ENCODE measurements at regions of chr11 and their contacts with region 1.

Region 1: DNA sequence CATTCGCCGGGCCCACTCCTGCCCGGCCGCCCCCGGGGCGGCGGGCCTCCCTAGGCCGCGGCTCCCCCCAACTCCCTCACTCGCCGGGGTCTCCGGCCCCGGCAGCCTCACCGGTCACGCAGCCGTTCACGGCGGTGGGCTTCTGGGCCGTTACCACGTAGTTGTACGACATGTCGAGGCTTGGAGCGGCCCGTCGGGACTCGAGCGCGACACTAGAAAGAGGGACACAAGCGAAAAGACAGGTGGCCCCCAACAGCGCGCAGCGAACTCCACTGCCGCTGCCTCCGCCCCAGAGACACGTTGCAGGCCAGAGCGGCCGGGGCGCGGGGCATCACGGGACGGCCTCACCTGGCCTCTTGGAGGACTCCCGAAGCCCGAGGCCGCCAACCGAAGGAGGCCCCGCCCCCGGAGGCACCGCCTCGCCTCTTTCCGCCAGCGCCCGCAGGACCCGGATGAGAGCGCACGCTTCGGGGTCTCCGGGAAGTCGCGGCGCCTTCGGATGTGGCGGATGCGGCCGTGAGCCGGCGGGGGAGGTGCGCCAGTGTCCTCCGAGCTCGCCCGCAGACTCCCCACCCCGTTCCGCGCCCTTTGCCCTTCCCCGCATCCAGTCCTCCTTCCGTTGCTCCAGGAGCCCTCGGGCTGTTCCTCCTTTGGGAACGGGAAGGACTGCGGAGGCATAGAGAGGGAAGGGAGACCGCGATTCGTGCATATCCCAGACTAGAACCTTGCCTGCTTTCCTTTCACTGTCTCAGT is at the starts of genes DDB1 and TKFC:
- DNase-seq: peak; percentile 95 to 97
- ATAC-seq: peak; percentile 95 to 98 (median 97)
- H3K4me3 ChIP-seq: peak within 1 kb of the TSS; percentile 79 to 99 (median 95)
- H3K27ac ChIP-seq: peak within 1 kb of the TSS; percentile 81 to 96 (median 92)
- H3K4me1 ChIP-seq: peaks cover 11 to 61% (median 44%) of the 10 kb centered on the region in 9 donors
- H3K27me3 ChIP-seq: no peaks in the 10 kb centered on the region
- CTCF ChIP-seq: peak in 2 of 9 donors; percentile 4 to 7
- total RNA-seq, gene DDB1: 101 to 147 (median 129) TPM
- total RNA-seq, gene TKFC: 13.9 to 26.1 (median 20.9) TPM

Region 2: DNA sequence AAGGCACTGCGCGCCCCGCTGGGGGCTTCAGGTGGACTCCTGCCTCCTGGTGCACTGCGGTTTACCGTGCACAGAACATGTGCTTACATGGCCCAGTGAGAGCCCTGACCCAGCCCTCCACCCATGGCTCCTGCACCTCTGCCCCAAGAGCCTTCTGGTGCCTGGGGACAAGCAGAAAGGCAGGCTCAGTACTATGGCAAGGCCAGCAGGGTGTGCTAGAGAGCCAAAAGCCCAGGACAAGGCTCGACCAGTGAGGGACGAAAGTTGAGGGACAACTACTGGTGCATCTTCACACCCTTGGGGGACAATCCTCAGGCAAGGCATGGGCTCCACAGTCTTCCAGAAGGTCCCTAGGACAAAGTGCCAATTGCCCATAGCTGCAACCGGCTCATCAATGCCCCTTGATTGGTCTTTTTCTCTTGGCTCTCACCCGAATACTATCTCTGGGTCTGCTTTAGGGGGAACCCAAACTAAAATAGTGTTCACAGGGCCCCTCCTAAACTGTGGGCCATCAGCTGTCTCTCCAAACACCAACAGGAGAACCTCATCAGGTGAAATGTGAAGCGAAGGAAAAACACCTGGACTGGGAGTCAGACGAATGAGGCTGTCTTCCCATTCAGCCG is 78.5 kb before region 1 on chr11:
- intact Hi-C with region 1: loop called in 1 of 10 experiments (anchors 10 kb)
- DNase-seq: peak; percentile 44 to 57
- ATAC-seq: peak in 7 of 8 donors; percentile 30 to 73 (median 57)
- H3K4me3 ChIP-seq: no peak overlapping the region
- H3K27ac ChIP-seq: no peak overlapping the region
- H3K4me1 ChIP-seq: peaks cover 0 to 14% (median 0%) of the 10 kb centered on the region in 9 donors
- H3K27me3 ChIP-seq: no peaks in the 10 kb centered on the region
- CTCF ChIP-seq: peak; percentile 63 to 91 (median 81)

Region 3: GRCh38 chr11:61361686-61362541 is 28.9 kb after region 1 on chr11 and contains the starts of genes CYB561A3 and TMEM138:
- intact Hi-C with region 1: loop called in 4 of 10 experiments (anchors 1 to 5 kb)
- DNase-seq: peak; percentile 90
- ATAC-seq: peak; percentile 96 to 98 (median 98)
- H3K4me3 ChIP-seq: peak within 1 kb of the TSS; percentile 43 to 89 (median 76)
- H3K27ac ChIP-seq: peak within 1 kb of the TSS; percentile 93 to 100 (median 99)
- H3K4me1 ChIP-seq: peaks cover 3 to 48% (median 30%) of the 10 kb centered on the region in 9 donors
- H3K27me3 ChIP-seq: no peaks in the 10 kb centered on the region
- CTCF ChIP-seq: no peak
- total RNA-seq, gene CYB561A3: 6.0 to 18.6 (median 9.7) TPM
- total RNA-seq, gene TMEM138: 14.4 to 25.9 (median 17.6) TPM

Region 4: DNA sequence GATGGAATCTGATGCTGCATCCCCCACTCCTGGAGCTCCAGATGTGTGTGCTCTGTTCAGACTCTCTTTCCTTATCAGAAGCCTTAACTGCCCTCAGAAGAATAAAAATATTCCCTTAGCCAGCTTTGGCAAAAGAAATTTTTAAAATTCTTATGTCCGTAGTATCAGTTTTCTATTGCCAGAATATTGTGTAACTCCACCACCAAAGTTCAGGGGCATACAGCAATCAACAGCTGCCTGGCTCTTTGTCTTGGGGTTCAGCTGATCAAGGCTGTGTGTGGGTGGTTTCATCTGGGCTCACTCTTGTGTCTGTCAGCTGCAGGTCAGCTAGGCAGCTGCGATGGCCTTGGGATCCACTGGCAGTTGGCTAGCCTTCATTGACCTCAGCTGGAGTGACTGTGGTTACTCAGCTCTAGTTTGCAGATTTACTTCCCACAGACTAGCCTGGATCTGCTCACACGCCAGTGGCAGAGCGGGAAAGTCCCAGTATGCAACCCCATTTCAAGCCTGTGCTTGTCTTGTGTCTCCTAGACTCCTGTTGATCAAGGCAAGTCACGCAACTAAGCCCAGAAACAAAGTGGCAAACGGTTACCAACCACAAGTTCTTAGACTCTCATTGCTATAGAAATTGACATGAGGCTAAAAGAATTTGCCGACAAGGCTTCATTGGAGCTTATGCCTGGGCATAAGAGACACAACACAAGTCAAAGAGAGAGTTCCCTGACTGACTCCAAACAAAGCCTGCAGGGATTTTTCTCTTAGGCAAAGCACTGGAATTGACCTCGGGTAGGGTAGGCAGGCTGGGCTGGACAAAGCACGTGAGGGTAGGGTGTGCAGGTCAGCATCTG is 36.6 kb after region 1 on chr11:
- intact Hi-C with region 1: loop called in 1 of 10 experiments (anchors 5 kb)
- DNase-seq: peak; percentile 39 to 44
- ATAC-seq: peak; percentile 68 to 93 (median 81)
- H3K4me3 ChIP-seq: no peak overlapping the region
- H3K27ac ChIP-seq: peak overlapping the region in 3 of 10 donors; percentile 27 to 49 (median 37)
- H3K4me1 ChIP-seq: peaks cover 0 to 12% (median 0%) of the 10 kb centered on the region in 9 donors
- H3K27me3 ChIP-seq: no peaks in the 10 kb centered on the region
- CTCF ChIP-seq: no peak

Region 5: DNA sequence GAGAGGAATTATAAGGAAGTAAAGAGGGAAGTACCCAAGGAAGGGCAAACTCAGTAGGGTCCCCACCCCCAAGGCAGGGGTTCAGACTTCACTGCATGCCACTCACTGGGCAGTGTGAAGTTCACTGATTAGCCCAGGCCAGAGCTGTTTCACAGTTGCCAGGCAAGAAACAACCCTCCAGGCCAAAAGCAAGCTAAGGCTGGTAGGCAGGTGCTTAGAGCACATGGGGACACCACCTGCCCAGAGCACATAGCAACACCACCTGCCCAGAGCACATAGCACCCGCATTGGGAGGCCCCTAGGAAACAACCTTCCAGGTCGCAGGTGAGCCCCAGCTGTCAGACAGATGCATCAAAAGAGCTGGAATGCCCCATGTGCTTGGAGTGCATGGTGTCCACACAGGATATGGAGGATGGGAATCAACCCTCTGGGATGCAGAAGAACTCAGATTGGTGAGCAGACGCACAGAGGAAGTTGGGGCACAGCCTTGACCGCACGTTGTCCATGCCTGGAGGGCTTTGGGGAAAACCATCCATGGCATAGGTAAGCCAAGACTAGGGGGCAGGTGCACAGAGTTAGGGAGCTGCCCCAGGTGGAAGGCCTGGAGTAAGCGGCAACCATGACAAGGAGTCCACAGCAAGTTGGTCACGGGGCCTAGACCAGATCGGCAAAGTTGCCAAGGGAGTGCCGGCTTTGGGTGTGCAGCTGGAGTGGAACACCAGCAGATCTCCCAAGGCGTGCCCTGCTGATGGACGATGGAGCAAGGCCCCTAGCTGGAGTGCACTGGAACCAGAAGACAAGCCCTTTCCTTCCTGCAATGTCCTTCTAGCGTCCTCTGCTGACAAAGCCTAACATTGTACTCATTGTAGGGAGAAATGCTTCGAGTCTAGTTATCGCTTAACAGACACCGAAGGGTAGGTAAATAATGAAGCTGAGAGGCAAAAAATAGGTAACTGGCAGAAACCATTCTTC is 51.6 kb after region 1 on chr11:
- intact Hi-C with region 1: loop called (anchors 1 to 2 kb)
- DNase-seq: no peak
- ATAC-seq: peak in 4 of 8 donors; percentile 10 to 29 (median 21)
- H3K4me3 ChIP-seq: no peak overlapping the region
- H3K27ac ChIP-seq: no peak overlapping the region
- H3K4me1 ChIP-seq: peaks cover 0 to 8% (median 4%) of the 10 kb centered on the region in 9 donors
- H3K27me3 ChIP-seq: no peaks in the 10 kb centered on the region
- CTCF ChIP-seq: no peak

Region 6: DNA sequence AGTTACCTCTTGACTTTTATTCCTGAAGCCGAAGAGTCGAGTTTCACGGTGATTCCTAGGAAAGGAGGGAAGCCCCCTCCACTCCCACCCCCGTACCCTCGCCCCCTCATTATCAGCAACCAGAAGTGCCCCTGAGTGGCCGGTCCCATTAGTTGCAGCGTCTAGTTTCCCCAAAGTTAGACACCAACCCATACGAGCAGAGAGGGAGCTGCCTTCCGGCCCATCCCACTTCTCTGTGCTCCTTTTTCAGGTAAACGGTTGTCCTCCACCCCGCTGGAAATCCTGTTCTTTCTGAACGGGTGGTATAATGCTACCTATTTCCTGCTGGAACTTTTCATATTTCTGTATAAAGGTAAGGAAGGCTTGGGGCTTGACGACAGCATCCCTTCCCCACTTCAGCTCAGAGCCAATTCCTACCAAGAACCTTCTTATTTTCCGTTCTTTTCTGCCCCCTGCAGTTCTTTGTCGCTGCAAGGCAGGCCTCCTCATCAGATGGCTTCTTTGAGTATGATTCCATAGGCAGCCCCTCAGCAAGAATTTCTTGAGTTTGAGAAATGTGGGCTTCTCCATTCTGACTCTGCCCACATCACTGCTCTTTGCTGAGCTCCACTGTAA is 60.1 kb after region 1 on chr11:
- intact Hi-C with region 1: loop called in 1 of 10 experiments (anchors 2 kb)
- DNase-seq: no peak
- ATAC-seq: peak in 6 of 8 donors; percentile 15 to 44 (median 27)
- H3K4me3 ChIP-seq: peak overlapping the region; percentile 58 to 85 (median 74)
- H3K27ac ChIP-seq: peak overlapping the region in 9 of 10 donors; percentile 76 to 95 (median 85)
- H3K4me1 ChIP-seq: peaks cover 0 to 22% (median 17%) of the 10 kb centered on the region in 9 donors
- H3K27me3 ChIP-seq: no peaks in the 10 kb centered on the region
- CTCF ChIP-seq: peak in 1 of 9 donors; percentile 10

Region 7: GRCh38 chr11:61429691-61430582 is 97.0 kb after region 1 on chr11 and contains the starts of genes CPSF7 and SDHAF2:
- intact Hi-C with region 1: loop called in 1 of 10 experiments (anchors 10 kb)
- DNase-seq: peak; percentile 96 to 97
- ATAC-seq: peak; percentile 96 to 99 (median 98)
- H3K4me3 ChIP-seq: peak within 1 kb of the TSS; percentile 49 to 91 (median 79)
- H3K27ac ChIP-seq: peak within 1 kb of the TSS; percentile 75 to 98 (median 96)
- H3K4me1 ChIP-seq: peaks cover 0 to 66% (median 41%) of the 10 kb centered on the region in 9 donors
- H3K27me3 ChIP-seq: no peaks in the 10 kb centered on the region
- CTCF ChIP-seq: no peak
- total RNA-seq, gene CPSF7: 37.7 to 51.8 (median 43.3) TPM
- total RNA-seq, gene SDHAF2: 24.4 to 39.9 (median 32.7) TPM

Measured in heart right ventricle (tissue), 16 donors.